Tibial artery (tissue), 4 donors: ENCODE measurements at regions of chr6 and their contacts with region 1.

Region 1: DNA sequence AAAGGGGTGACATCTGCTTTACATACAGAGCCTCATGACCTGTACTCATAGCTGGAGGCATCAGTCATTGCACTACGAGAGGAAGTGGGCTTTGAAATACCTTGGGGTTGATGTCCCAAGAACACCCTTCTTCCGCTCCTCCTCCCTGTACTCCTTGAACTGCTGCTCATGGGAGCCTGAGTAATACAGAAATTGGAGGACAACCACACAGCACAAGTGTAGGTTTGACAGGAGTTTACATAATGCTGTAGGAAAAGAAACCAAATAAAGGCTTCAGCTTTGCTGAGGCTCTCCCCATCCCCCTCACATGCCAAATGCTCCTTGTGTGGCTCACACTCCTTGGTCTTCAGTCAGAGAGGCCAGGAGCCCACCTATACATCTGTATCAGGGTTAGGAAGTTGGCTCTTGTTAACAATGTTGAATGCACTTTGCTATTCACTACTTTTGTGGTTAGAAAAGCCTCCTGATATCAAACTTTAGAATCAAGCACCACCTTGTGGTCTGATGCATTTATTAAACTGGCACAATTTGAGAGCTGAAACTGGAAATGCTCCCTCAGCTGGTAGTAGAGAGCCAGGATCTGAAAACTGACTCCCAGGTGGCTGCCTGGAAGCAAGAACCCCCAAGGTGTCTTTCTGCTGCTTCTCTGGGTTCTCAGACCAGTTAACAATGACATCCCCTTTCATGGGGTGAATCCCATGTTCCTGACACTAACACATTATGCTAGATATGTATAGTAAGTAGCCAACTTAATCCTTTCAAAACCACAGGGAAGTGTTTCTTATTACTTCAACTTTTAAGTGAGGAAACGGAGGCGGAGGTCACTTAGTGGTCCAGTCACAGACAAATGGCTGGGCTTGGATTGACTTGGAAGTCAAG is 56.2 kb upstream of the EDN1 start:
- DNase-seq: no peak
- H3K4me3 ChIP-seq: no peak overlapping the region
- H3K27ac ChIP-seq: no peak overlapping the region
- H3K4me1 ChIP-seq: peaks cover 0 to 8% (median 5%) of the 10 kb centered on the region in 4 donors
- H3K27me3 ChIP-seq: no peaks in the 10 kb centered on the region
- CTCF ChIP-seq: peak; percentile 86 to 90

Region 2: GRCh38 chr6:11654876-11655275 is 579.1 kb before region 1 on chr6:
- intact Hi-C with region 1: loop called (anchors 5 kb)
- DNase-seq: no peak
- H3K4me3 ChIP-seq: no peak overlapping the region
- H3K27ac ChIP-seq: peak overlapping the region; percentile 31 to 36
- H3K4me1 ChIP-seq: peaks cover 0 to 26% (median 9%) of the 10 kb centered on the region in 4 donors
- H3K27me3 ChIP-seq: no peaks in the 10 kb centered on the region
- CTCF ChIP-seq: no peak